ENCODE measurements at regions of chr6 and their contacts with region 1.

Region 1: GRCh38 chr6:149094156-149094555 is 223.4 kb upstream of the TAB2 start:
- DNase-seq: peak; percentile 61
- ATAC-seq: peak; percentile 54
- H3K4me3 Mint-ChIP-seq: peak overlapping the region; percentile 55
- H3K27ac Mint-ChIP-seq: peak overlapping the region; percentile 94
- H3K4me1 Mint-ChIP-seq: peaks cover 77% of the 10 kb centered on the region
- H3K27me3 Mint-ChIP-seq: no peaks in the 10 kb centered on the region

Region 2: GRCh38 chr6:149082286-149082707 is 11.9 kb before region 1 on chr6:
- CTCF ChIA-PET with region 1: interaction called, 12 read pairs
- DNase-seq: peak; percentile 94
- ATAC-seq: peak; percentile 79
- H3K4me3 Mint-ChIP-seq: peak overlapping the region; percentile 18
- H3K27ac Mint-ChIP-seq: peak overlapping the region; percentile 96
- H3K4me1 Mint-ChIP-seq: peaks cover 87% of the 10 kb centered on the region
- H3K27me3 Mint-ChIP-seq: no peaks in the 10 kb centered on the region

Region 3: DNA sequence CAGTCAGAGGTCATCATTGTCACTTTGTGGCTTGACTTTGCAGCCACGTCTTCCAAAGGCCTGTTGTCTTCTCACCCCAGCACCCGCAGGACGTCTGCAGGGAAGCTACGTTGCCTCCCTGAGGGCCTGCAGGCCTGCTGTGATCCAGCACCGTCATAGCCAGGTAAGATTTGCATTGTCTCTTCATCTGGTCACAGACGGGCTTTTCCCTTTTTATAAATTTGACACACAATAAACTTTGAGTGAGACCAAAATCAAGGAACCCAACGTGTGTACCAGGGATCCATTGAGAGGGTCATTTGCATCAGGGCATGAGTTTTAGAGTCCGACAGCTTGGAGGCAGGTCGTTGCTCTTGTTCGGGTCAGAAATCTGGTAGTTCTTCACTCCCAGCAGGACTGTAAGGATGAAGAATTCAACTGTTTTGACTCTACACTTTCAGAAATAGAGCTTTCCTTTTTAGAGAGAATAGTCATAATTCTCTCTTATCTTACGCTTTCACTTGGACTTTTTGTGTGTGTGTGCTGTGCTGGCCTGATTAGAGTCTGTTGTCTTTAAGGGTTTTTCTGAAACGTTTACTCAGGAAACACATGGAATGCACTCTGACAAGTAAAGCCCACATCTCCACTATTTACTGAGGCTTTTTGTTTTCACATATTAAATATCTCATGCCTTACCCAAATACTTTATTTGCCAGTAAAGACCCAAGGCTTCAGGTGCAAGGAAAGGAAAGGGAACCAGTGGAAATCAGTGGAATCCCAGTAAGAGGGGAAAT is 46.2 kb after region 1 on chr6:
- CTCF ChIA-PET with region 1: interaction called, 11 read pairs
- DNase-seq: peak; percentile 84
- ATAC-seq: peak; percentile 78
- H3K4me3 Mint-ChIP-seq: peak overlapping the region; percentile 74
- H3K27ac Mint-ChIP-seq: peak overlapping the region; percentile 97
- H3K4me1 Mint-ChIP-seq: peaks cover 70% of the 10 kb centered on the region
- H3K27me3 Mint-ChIP-seq: no peaks in the 10 kb centered on the region

Measured in activated CD8-positive, alpha-beta memory T cell treated with anti-CD3 and anti-CD28 coated beads, Interleukin-2, amount 10 ng/mL, durations not matched to agents 7 days and 5 days (primary cell).